AG04450 (cell line): ENCODE measurements at regions of chr15 and their contacts with region 1.

Region 1: DNA sequence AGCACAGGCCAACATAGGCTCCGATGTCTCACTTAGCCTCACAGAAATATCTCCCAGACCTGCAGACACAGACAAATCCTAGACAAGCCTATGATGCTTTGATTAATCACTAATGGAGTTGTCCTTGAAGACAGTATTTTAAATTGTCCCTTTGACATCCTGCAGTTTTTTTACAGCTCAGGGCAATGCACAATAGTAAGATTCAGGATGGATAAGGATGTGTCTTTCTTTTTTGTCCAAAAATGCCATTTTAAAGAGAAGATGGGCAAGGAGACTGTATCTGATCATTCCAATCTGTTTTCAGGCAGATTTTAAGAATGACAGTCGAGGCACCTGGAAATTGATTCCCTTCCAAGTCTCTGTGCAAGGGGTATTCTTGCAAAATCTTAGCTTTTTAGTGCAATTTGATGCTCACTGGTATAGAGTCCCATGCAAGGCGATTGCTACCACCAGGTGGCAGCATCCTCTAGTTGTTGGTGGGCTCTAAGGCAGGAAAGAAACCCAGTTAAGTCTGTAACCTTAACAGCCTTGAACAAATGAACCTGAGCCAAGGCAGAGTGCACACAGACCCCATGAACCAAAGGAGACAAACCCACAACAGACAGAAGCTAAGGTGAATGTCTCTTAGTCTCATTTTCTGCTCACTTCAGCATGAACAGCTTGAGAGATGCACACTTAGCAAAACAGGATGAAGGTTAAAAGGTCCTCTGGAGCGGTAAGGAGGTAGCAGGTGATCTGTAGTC is 51.2 kb upstream of the MINAR1 start:
- DNase-seq: peak; percentile 45
- H3K4me3 ChIP-seq: no peak overlapping the region
- H3K27ac ChIP-seq: no peak overlapping the region
- H3K27me3 ChIP-seq: no peaks in the 10 kb centered on the region
- CTCF ChIP-seq: peak; percentile 98

Region 2: DNA sequence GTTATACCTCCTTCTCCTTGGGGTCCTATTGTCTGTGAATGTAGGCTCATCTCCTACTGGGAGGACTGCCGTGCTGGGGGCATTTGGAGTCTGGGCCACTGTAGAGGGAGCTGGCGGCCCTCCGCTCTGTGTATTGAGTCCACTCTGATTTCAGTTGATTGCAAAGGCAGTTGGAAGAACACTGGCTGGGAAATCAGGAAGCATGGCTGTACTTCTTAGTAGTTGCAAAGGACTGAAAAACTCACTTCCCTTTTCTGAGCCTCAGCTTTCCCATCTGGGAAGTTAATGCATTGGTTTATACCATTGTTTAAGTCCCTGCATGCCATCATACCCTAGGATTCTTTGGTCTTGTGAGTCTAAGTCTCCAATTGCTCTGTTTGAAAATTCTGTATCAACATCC is 23.4 kb before region 1 on chr15:
- CTCF ChIA-PET with region 1: interaction called, 12 read pairs
- POLR2A ChIA-PET with region 1: no interaction called
- DNase-seq: no peak
- H3K4me3 ChIP-seq: no peak overlapping the region
- H3K27ac ChIP-seq: no peak overlapping the region
- H3K27me3 ChIP-seq: no peaks in the 10 kb centered on the region
- CTCF ChIP-seq: no peak

Region 3: DNA sequence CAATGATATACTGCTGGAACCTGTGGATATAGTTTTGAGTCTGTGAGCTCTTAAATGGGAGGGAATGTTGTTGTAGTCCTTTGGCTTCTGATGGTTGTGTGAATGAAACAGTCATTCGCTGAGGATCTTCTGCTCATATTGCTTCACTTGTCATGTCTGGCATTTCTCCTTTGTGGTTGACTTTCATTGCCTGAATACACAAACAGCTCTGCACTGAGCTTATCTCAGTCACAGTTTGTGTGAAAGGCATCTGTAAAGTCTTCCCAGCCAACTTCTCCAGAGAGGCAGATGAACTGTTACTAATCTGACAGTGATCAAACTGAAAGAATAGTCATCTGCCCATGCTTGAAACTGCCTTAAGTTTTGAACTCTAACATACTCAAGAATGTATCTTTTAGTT is 10.2 kb before region 1 on chr15:
- CTCF ChIA-PET with region 1: interaction called, 46 read pairs
- POLR2A ChIA-PET with region 1: no interaction called
- DNase-seq: no peak
- H3K4me3 ChIP-seq: no peak overlapping the region
- H3K27ac ChIP-seq: no peak overlapping the region
- H3K27me3 ChIP-seq: no peaks in the 10 kb centered on the region
- CTCF ChIP-seq: no peak

Region 4: DNA sequence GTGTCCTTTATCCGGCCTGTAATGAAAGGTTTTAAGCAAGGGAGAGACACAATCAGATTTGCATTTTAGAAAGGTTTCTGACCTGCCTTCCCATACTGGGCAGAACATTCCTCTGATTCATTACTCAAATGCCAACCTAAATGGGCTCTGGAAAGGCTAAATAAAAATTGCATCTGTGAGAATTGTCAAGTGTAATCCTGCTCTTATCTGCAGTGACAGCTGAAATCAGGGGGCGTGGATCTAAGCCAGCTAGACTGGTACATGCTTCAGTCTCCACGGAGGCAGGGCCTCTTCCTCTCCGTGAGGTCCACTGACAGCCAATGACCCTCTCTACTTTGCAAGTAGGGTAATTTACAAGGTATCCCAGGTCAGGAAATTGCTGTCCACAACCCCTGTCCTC is 18.7 kb after region 1 on chr15:
- CTCF ChIA-PET with region 1: interaction called, 62 read pairs
- POLR2A ChIA-PET with region 1: no interaction called
- DNase-seq: no peak
- H3K4me3 ChIP-seq: no peak overlapping the region
- H3K27ac ChIP-seq: no peak overlapping the region
- H3K27me3 ChIP-seq: no peaks in the 10 kb centered on the region
- CTCF ChIP-seq: no peak

Region 5: DNA sequence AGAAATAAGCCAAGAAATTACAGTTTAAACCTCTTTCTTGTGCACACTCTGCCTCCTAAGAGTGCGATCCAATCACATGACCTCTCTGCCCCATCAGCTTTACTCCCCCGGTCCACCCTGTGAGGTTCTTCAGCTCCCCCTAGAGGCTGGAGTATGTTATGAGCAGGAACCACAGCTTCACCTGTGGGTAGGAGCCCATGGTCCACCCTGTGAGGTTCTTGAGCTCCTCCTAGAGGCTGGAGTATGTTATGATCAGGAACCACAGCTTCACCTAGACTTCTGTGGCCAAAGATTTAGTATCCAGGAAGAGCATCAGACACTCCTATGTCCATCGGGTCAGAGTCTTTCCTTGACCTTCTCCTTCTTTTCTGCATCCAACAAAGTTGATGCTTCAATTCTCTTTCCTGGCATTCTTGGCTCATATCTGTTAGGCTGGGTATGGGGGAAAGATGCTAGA is 215.2 kb after region 1 on chr15:
- CTCF ChIA-PET with region 1: interaction called, 146 read pairs
- POLR2A ChIA-PET with region 1: no interaction called
- DNase-seq: peak; percentile 27
- H3K4me3 ChIP-seq: no peak overlapping the region
- H3K27ac ChIP-seq: no peak overlapping the region
- H3K27me3 ChIP-seq: peaks cover 5% of the 10 kb centered on the region
- CTCF ChIP-seq: peak; percentile 83

Region 6: GRCh38 chr15:79872358-79873017 is 491.6 kb after region 1 on chr15:
- CTCF ChIA-PET with region 1: interaction called, 12 read pairs
- POLR2A ChIA-PET with region 1: no interaction called
- DNase-seq: no peak
- H3K4me3 ChIP-seq: no peak overlapping the region
- H3K27ac ChIP-seq: no peak overlapping the region
- H3K27me3 ChIP-seq: no peaks in the 10 kb centered on the region
- CTCF ChIP-seq: no peak